Posterior vena cava (tissue), 2 donors: ENCODE measurements at regions of chr7 and their contacts with region 1.

Region 1: GRCh38 chr7:132318352-132319318 is 257.6 kb downstream of the PLXNA4 start:
- DNase-seq: peak; percentile 96

Region 2: GRCh38 chr7:132500727-132501440 is 182.2 kb after region 1 on chr7:
- intact Hi-C with region 1: loop called in 1 of 2 experiments (anchors 5 kb)
- DNase-seq: peak; percentile 93

Region 3: GRCh38 chr7:132575419-132575981 is 256.9 kb after region 1 on chr7:
- intact Hi-C with region 1: loop called (anchors 1 to 5 kb)
- DNase-seq: peak; percentile 89